AG04449 (cell line): ENCODE measurements at regions of chr1 and their contacts with region 1.

Region 1: GRCh38 chr1:162687870-162688269 is 55.6 kb downstream of the DDR2 start:
- DNase-seq: no peak
- H3K4me3 ChIP-seq: no peak overlapping the region
- CTCF ChIP-seq: no peak

Region 2: DNA sequence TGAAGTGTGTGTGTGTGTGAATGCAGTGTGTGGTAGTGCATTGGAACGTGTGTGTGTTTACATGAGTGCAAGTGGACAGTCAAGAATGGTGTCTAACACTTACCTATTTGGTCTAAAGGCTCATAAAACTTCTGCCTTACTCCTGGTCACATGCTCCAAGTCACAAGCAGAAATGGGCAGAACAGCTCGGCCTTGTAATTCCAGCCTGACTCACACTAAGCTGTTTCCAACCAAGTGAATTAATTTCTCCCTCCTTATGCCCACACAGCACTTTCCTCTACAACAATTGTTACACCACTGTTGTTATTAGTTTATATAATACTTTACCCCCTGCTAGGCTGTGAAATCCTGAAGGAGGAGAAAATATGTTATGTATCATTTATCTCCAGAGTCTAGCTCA is 11.8 kb before region 1 on chr1:
- CTCF ChIA-PET with region 1: interaction called, 12 read pairs
- POLR2A ChIA-PET with region 1: interaction called, 4 read pairs
- DNase-seq: no peak
- H3K4me3 ChIP-seq: no peak overlapping the region
- CTCF ChIP-seq: no peak

Region 3: DNA sequence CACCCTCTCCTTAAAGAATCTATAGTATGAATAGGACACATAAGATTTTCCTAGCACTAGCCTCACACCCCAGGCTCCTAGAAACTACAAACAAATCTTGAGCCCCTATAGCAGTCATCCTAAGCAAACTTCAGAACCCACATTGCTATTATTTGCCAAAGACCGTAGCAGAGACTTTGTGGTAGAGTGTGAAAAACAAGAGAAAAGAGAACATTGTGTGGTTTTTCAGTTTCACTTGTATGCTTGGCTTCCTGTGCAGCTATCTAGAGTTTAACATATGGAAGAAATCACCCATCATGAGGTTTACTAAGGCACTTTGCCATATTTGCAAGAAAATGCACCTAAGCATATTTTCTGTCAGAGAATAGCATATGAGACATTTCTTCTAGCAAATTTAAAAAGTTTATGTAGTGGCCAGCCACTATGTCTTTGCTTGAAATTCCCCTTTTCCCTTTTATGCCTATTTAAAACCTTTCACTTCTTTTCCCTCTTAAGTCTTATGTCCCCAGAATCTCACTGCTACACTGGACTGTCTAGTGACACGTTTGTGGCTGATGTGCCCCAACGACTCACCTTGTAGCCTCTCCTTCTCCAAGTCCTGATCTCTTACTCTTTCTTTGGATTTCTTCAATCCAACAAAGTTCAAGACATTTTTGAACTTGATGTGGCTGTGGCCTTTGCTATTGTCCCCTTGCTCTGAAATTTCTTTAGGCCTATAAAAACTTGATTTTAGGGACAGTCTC is 147.5 kb after region 1 on chr1:
- CTCF ChIA-PET with region 1: no interaction called
- POLR2A ChIA-PET with region 1: no interaction called
- DNase-seq: no peak
- H3K4me3 ChIP-seq: no peak overlapping the region
- CTCF ChIP-seq: no peak